ENCODE measurements at regions of chr13 and their contacts with region 1.

Region 1: GRCh38 chr13:33958964-33959363 is 141.0 kb downstream of the RFC3 start:
- DNase-seq: no peak

Region 2: GRCh38 chr13:33945477-33945876 is 13.5 kb before region 1 on chr13:
- intact Hi-C with region 1: loop called (anchors 2 kb)
- DNase-seq: no peak